ENCODE measurements at regions of chr1 and their contacts with region 1.

Region 1: GRCh38 chr1:119367427-119368124 is 1.0 kb upstream of the HAO2 start:
- DNase-seq: peak; percentile 50
- ATAC-seq: no peak

Region 2: GRCh38 chr1:118987468-118988185 is 379.9 kb before region 1 on chr1:
- intact Hi-C with region 1: no loop called
- DNase-seq: no peak
- ATAC-seq: peak; percentile 71

Region 3: GRCh38 chr1:119286587-119287181 is 80.9 kb before region 1 on chr1:
- intact Hi-C with region 1: loop called (anchors 5 kb)
- DNase-seq: no peak
- ATAC-seq: no peak

Region 4: DNA sequence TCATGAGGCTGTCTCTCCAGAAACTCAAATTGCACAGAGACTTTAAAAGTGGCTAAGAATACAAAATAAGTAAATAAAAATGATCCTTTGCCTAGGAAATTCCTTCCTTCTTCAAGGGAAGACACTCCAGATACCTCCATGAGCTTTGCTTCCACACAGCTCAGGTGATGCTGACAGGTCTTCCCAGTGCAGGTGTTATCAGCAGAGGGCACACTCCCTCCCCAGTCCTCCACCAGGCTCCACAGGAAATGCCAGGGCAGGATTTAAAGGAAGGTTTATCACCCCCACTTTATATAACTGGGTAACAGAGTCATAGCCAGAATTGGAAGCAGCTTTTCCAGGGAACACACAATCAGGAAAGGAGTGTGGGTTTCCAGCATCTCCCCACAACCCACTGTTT is 53.1 kb after region 1 on chr1:
- intact Hi-C with region 1: no loop called
- DNase-seq: no peak
- ATAC-seq: no peak

Measured in Right ventricle myocardium inferior (tissue), 1 donor.